Mucosa of descending colon (tissue), 3 donors: ENCODE measurements at regions of chr15 and their contacts with region 1.

Region 1: DNA sequence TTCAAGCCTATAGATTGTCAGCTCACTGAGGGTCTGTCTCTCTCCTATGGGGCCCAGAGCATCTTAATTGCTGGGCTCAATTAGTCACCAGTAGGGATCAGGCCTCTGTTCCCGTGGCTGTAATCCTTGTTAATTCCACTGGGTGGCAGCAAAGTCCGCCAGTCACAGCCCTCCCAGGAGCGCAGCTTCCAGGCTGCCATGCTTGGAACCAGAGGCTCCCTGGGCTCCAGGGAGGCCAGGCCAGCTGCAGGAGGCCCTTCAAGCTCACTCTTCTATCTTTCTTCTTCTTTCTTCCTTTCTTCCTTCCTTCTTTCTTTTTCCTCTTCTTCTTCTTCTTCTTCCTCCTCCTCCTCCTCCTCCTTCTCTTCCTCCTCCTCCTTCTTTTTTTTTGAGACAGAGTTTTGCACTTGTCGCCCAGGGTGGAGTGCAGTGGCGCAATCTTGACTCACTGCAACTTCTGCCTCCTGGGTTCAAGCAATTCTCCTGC is 14.4 kb downstream of the RNU5B-1 start:
- DNase-seq: peak; percentile 70 to 85 (median 82)
- ATAC-seq: peak; percentile 99
- H3K4me3 ChIP-seq: no peak overlapping the region
- H3K4me1 ChIP-seq: no peaks in the 10 kb centered on the region
- CTCF ChIP-seq: peak; percentile 79

Region 2: GRCh38 chr15:65384895-65385858 is 66.3 kb after region 1 on chr15:
- intact Hi-C with region 1: loop called (anchors 2 to 5 kb)
- DNase-seq: peak; percentile 81 to 92 (median 86)
- ATAC-seq: peak; percentile 98
- H3K4me3 ChIP-seq: no peak overlapping the region
- H3K4me1 ChIP-seq: peaks cover 11% of the 10 kb centered on the region
- CTCF ChIP-seq: peak; percentile 81